GM12878 (cell line): ENCODE measurements at regions of chr20 and their contacts with region 1.

Region 1: GRCh38 chr20:35447082-35447789 is 8.2 kb upstream of the CEP250 start:
- DNase-seq: peak; percentile 40
- ATAC-seq: peak; percentile 99
- H3K4me3 ChIP-seq: peak overlapping the region; percentile 80
- H3K27ac ChIP-seq: no peak overlapping the region
- H3K4me1 ChIP-seq: no peaks in the 10 kb centered on the region; the same call in 1 of the 2 replicates
- H3K27me3 ChIP-seq: no peaks in the 10 kb centered on the region
- CTCF ChIP-seq: peak; percentile 76 to 98 (median 93)
- EP300 ChIP-seq: no peak
- POLR2A ChIP-seq: no peak
- RAD21 ChIP-seq: peak; percentile 62

Region 2: GRCh38 chr20:35432430-35432735 is 14.9 kb before region 1 on chr20:
- CTCF ChIA-PET with region 1: interaction called, 11 read pairs
- POLR2A ChIA-PET with region 1: interaction called, 3 read pairs
- RAD21 ChIA-PET with region 1: no interaction called
- SMC1A ChIA-PET with region 1: interaction called, 4 read pairs
- in situ Hi-C with region 1: no loop called
- intact Hi-C with region 1: no loop called
- DNase-seq: no peak
- ATAC-seq: no peak
- H3K4me3 ChIP-seq: no peak overlapping the region
- H3K27ac ChIP-seq: no peak overlapping the region
- H3K4me1 ChIP-seq: no peaks in the 10 kb centered on the region
- H3K27me3 ChIP-seq: no peaks in the 10 kb centered on the region; a peak in 1 of 4 replicates
- CTCF ChIP-seq: no peak
- EP300 ChIP-seq: no peak
- POLR2A ChIP-seq: no peak
- RAD21 ChIP-seq: no peak